ENCODE measurements at regions of chr5 and their contacts with region 1.

Region 1: DNA sequence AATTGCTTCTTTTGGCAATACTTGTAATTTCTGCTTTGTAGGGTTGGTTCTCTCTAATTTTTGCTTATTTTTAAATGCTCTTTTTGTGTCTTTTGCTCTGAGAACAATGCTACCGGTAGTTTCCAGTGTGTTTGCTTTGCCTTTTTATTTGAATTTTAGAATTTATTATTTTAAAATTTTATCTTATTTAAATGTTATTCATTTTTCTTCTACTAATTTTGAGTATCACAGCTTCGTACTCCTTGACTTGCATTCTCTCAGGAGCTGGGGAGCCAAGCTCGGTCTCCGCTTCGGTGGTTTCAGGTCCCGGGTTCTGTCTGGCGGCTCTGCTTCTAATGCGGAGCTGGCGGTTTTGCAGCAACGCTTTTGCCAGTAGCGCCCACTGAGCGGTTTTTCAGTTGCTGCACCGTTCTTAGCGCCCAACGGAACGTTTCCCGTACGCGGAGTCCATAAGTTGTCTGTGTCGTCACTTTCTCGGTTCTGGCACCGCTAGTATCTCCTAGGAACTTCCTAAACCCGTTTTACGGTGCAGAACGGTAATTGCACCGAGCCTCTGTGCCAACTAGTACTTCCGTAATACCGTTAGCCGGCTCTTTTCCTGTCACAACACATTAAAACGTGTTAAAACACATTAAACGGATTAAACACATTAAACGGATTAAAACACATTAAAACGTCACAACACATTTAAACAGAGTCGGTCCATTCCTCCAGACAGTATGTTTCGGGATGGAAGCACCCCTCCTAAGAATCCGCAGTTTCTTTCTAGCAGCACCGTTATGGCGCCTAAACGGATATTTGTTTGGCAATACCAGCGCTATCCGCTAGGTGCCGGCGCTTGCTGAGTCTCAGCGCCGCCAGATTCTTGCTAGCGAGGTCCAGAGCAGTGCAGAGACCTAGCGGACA is 45.6 kb downstream of the ANXA2R start:
- DNase-seq: peak; percentile 67 to 73
- H3K4me3 ChIP-seq: peak overlapping the region in 1 of 3 donors; percentile 23
- H3K27ac ChIP-seq: peak overlapping the region; percentile 26 to 78 (median 76)
- H3K4me1 ChIP-seq: peaks cover 12 to 18% of the 10 kb centered on the region in 2 donors
- H3K27me3 ChIP-seq: peaks cover 74% of the 10 kb centered on the region
- CTCF ChIP-seq: peak; percentile 49 to 77 (median 68)
- POLR2A ChIP-seq: no peak

Region 2: DNA sequence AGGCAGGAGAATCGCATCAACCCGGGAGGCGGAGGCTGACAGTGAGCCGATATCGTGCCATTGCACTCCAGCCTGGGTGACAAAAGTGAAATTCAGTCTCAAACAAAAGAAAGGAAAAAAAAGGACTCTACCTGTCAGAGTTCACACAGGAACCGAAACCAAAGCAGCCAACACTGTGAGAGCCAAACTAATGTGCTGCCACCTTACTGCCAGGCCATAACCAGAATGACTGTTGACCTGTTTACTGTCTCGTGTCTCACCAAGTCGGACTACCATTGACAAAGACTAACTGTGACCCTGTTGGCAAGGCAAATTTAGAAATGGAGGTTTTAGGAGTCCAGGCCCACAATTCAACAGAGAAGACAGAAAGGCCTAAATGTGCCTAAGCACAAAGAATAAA is 66.8 kb before region 1 on chr5:
- intact Hi-C with region 1: no loop called
- DNase-seq: no peak
- H3K4me3 ChIP-seq: no peak overlapping the region
- H3K27ac ChIP-seq: no peak overlapping the region
- H3K4me1 ChIP-seq: no peaks in the 10 kb centered on the region
- H3K27me3 ChIP-seq: no peaks in the 10 kb centered on the region
- CTCF ChIP-seq: no peak
- POLR2A ChIP-seq: no peak

Region 3: GRCh38 chr5:42950440-42951292 is 43.8 kb before region 1 on chr5:
- intact Hi-C with region 1: loop called (anchors 5 kb)
- DNase-seq: peak; percentile 29 to 46
- H3K4me3 ChIP-seq: peak overlapping the region in 2 of 3 donors; percentile 33 to 35
- H3K27ac ChIP-seq: peak overlapping the region; percentile 71 to 86 (median 83)
- H3K4me1 ChIP-seq: peaks cover 28 to 30% of the 10 kb centered on the region in 2 donors
- H3K27me3 ChIP-seq: peaks cover 58% of the 10 kb centered on the region
- CTCF ChIP-seq: no peak
- POLR2A ChIP-seq: no peak

Region 4: GRCh38 chr5:43039471-43040286 is 45.2 kb after region 1 on chr5:
- intact Hi-C with region 1: loop called (anchors 5 kb)
- DNase-seq: no peak
- H3K4me3 ChIP-seq: peak overlapping the region in 2 of 3 donors; percentile 14 to 45
- H3K27ac ChIP-seq: peak overlapping the region; percentile 63 to 88 (median 65)
- H3K4me1 ChIP-seq: peaks cover 18 to 20% of the 10 kb centered on the region in 2 donors
- H3K27me3 ChIP-seq: peaks cover 45% of the 10 kb centered on the region
- CTCF ChIP-seq: no peak
- POLR2A ChIP-seq: no peak

Measured in thyroid gland (tissue), 4 donors.